GM18951 (cell line): ENCODE measurements at regions of chr9 and their contacts with region 1.

Region 1: DNA sequence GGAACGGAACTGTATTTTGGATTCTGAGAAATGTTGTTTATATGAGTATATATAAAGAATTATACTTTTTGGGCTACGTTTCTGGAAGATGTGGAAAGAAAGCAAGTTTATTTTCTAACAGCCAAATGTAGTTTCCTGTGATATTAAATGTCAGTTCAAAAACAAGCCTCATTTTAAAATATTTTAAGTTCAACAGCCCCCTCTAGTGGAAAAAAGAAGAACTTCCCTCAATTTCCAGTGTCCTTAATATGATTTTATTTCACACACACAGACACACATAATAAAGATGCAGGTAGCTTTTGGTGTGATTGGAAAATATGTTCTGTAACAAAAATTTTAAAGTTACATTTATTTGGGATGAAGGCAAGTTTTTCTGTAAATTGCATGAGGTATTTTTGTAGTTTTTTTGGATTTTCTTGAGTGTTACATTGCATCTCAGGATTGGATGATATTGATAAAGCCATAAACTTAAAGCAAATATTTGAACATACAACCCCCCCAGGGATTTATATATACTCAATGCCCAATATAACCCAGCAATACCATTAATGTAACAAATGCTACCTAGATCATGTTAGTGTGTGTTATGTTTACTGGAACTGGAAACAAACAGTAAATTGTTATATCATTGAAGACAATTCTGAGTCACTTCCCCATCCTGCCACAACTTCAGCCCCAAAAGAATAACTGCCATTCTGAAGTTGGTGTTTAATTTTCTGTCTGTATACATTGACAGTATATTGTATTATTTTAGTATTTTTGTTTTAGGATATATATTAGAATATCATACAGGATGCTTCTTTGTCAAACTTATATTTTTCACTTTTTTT is 54.0 kb downstream of the CCDC171 start:
- POLR2A ChIP-seq: no peak

Region 2: GRCh38 chr9:15211160-15211814 is 395.6 kb before region 1 on chr9:
- in situ Hi-C with region 1: loop called (anchors 25 kb)
- POLR2A ChIP-seq: no peak